Activated T-helper 2 cell treated with anti-CD3 and anti-CD28 coated beads, Interferon-gamma antibody, Interleukin-2, Interleukin-4, amounts not matched to agents 10 μg/mL and 5 μg/mL and 100 μg/mL, durations not matched to agents 14 hours and 24 hours and 36 hours (primary cell): ENCODE measurements at regions of chr15 and their contacts with region 1.

Region 1: DNA sequence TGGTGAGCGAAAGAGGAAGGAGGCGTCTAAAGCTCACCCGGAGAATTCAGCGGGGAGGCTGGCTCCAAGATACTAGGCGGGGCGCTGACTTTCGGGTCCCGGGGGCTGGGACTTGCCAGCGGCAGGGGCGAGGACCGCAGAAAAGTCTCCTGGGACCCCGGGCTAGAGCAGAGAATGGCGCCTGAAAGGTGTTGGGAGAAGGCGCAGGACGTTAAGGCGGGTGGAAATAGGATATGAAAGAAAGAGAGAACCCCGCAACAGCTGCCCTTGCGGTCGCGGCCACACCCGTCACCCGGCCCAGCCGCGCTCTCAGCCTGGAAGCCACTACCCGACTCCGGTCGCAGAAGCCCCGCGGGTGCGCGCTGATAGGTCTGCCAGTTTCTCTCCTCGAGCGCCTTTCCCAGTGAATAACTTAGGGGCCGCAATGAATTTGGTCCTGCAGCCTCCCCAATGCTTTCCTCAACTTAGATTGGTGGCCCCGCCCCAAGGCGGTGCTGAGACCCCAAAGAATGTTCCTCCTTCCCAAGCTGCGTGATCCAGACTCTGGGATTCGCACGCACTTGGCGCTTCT is 602 bp downstream of the LTK start:
- DNase-seq: no peak
- H3K4me3 Mint-ChIP-seq: peak overlapping the region; percentile 62
- H3K27ac Mint-ChIP-seq: no peak overlapping the region
- H3K4me1 Mint-ChIP-seq: peaks cover 24% of the 10 kb centered on the region
- H3K27me3 Mint-ChIP-seq: peaks cover 35% of the 10 kb centered on the region

Region 2: DNA sequence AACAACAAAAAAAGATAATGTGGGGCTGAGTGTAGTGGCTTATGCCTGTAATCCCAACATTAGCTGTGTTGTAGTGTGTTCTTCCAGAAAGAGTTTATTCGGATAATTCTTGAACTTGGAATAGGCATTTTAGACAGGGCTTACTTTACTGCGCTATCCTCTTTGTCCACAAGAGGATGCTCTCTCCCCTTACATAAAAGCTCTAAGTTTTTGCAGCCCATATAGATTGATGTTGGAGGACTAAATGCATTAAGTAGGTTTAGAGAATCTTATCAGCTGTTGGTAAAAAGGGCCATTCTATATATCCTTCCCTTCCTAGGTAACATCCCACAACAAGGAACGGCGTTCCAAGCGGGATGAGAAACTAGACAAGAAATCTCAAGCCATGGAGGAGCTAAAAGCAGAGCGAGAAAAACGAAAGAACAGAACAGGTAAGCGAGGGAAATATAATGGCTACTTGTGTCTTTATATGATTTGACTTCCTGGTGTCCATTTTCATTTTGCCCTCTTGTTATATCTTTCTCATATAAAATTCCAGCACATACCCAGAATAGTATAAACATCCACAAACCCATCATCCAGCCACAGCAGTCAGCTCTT is 47.1 kb before region 1 on chr15:
- intact Hi-C with region 1: loop called (anchors 5 kb)
- DNase-seq: no peak
- H3K4me3 Mint-ChIP-seq: no peak overlapping the region
- H3K27ac Mint-ChIP-seq: no peak overlapping the region
- H3K4me1 Mint-ChIP-seq: peaks cover 8% of the 10 kb centered on the region
- H3K27me3 Mint-ChIP-seq: no peaks in the 10 kb centered on the region